Activated CD8-positive, alpha-beta T cell treated with anti-CD3 and anti-CD28 coated beads for 36 hours (primary cell): ENCODE measurements at regions of chr21 and their contacts with region 1.

Region 1: DNA sequence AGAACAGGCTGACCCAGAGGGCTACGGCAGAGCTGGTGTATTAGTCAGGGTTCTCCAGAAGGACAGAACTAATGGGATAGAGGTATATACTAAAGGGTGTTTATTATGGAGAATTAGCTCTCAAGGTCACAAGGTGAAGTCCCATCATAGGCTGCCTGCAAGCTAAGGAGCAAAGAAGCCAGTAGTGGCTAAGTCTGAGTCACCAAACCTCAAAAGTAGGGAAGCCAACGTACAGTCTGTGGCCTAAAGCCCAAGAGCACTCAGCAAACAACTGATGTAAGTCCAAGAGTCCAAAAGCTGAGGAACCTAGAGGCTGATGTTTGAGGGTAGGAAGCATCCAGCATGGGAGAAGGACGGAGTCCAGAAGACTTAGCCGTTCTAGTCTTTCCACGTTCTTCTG is 179.2 kb downstream of the BACH1 start:
- DNase-seq: no peak
- ATAC-seq: no peak
- H3K4me3 Mint-ChIP-seq: no peak overlapping the region
- H3K27ac Mint-ChIP-seq: no peak overlapping the region
- H3K4me1 Mint-ChIP-seq: peaks cover 17% of the 10 kb centered on the region
- H3K27me3 Mint-ChIP-seq: no peaks in the 10 kb centered on the region
- CTCF ChIP-seq: no peak

Region 2: DNA sequence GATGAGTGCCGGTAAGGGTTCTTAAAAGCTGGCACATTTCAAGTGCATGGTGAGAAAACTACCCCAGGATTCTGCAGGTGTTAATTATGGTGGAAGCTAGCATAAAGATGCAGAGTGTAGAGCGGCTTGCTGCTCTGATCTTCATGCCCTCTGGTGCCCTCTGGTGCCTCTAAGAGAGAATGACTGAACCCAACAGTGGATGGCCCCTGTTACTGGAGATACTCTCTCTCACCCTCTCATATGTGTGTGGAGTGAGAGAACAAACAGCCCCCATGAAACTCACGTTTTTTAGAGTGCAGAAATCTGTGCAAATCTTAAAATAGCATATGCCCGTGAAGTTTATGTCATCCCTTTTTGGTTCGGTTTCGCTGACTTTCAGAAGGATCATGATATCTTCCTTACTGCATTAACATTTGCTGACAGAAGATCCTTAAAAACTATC is 371.8 kb after region 1 on chr21:
- CTCF ChIA-PET with region 1: interaction called, 34 read pairs
- POLR2A ChIA-PET with region 1: no interaction called
- intact Hi-C with region 1: loop called (anchors 1 kb)
- DNase-seq: peak; percentile 61
- ATAC-seq: peak; percentile 100
- H3K4me3 Mint-ChIP-seq: no peak overlapping the region
- H3K27ac Mint-ChIP-seq: no peak overlapping the region
- H3K4me1 Mint-ChIP-seq: no peaks in the 10 kb centered on the region
- H3K27me3 Mint-ChIP-seq: peaks cover 8% of the 10 kb centered on the region
- CTCF ChIP-seq: peak; percentile 67